ENCODE measurements at regions of chr11 and their contacts with region 1.

Region 1: DNA sequence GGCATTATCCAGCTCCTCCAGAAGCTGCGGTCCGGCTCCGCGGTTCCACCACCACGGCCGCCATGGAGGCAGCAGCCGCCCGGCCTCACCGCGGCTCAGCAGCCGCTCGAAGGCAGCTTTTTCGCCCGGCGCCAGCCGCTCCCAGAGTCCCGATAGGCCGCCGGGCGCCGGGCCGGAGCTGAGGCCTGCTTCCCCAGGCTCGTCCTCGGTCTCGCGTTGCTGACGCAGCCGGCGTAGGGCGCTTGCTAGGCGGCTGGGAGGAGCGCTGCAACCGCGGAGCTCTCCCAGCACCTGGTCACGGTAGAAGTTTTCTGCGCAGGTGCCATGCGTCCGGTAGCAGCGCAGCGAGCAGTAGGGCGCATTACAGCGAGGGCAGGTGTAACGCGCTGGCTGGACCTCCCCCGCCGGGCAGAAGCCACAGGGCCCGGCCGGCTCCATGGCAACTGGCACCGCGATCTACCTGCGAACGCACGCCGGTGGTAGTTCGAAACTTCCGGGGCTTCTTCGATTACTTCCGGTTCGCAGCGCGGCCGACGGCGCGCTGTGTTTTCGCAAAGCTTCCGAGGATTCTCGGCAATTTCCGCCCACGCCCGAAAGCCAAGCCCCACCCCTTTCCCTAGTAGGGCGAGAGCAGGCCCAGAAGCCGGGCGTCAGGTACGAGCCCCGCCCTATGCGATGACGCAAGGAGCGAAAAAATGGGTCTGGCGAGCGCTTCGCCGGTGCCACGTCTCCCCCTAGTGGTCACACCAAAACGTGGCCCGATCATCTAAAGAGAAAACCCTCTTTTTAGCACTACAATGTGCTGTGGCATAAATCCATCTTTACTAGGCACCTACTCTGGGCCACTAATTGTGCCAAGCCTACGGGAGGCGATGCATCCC is at the start of gene ZNHIT2:
- DNase-seq: peak; percentile 98
- H3K4me3 ChIP-seq: peak within 1 kb of the TSS; percentile 92
- H3K27ac ChIP-seq: peak within 1 kb of the TSS; percentile 73
- H3K27me3 ChIP-seq: no peaks in the 10 kb centered on the region
- CTCF ChIP-seq: peak; percentile 89
- polyA plus RNA-seq, gene ZNHIT2: 3.1 and 3.6 TPM in 2 replicates

Region 2: GRCh38 chr11:65134386-65135253 is 17.2 kb after region 1 on chr11 and contains the start of gene SYVN1:
- CTCF ChIA-PET with region 1: interaction called, 5 read pairs
- POLR2A ChIA-PET with region 1: interaction called, 20 read pairs
- DNase-seq: peak; percentile 92
- H3K4me3 ChIP-seq: peak within 1 kb of the TSS; percentile 95
- H3K27ac ChIP-seq: peak within 1 kb of the TSS; percentile 99
- H3K27me3 ChIP-seq: no peaks in the 10 kb centered on the region
- CTCF ChIP-seq: no peak
- polyA plus RNA-seq, gene SYVN1: 18.7 and 27.7 TPM in 2 replicates